CD4-positive, alpha-beta T cell (primary cell): ENCODE measurements at regions of chr15 and their contacts with region 1.

Region 1: DNA sequence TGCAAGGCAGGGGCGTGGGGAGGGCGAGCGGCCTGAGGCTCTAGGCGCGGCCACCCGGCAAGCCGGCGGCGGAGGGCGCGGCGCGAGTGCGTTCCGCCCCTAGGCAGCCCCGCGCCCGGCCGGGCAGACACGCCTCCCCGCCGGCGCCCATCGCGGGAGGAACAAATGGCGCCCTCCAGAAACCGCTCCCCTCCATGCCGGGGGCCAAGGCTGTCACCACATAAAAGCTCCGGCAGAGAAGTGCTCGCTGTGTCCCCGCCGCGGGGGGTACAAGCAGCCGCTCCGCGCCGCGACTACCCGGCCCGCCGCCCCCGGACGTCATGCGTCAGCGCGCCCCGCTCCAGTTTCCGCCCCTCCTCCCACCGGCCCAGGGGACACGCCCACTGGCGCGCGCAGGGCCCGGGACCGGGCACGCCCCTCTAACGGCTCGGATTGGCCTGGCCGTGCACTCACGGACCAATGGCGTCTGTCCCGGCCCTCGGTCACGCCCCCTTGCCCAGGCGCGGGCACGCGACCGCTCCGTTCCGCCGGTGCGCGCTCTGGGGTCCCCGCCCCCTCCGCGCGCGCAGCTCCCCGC is 391 bp upstream of the KLF13 start:
- DNase-seq: peak; percentile 98 to 100 (median 100)
- ATAC-seq: peak; percentile 69
- H3K4me3 ChIP-seq: peak overlapping the region; percentile 59
- H3K4me3 Mint-ChIP-seq: peak overlapping the region; percentile 90
- H3K27ac ChIP-seq: peak overlapping the region; percentile 71 to 95
- H3K27ac Mint-ChIP-seq: peak overlapping the region; percentile 92
- H3K4me1 ChIP-seq: peaks cover 43% of the 10 kb centered on the region
- H3K4me1 Mint-ChIP-seq: peaks cover 64% of the 10 kb centered on the region
- H3K27me3 ChIP-seq: no peaks in the 10 kb centered on the region
- H3K27me3 Mint-ChIP-seq: no peaks in the 10 kb centered on the region
- CTCF ChIP-seq: no peak

Region 2: DNA sequence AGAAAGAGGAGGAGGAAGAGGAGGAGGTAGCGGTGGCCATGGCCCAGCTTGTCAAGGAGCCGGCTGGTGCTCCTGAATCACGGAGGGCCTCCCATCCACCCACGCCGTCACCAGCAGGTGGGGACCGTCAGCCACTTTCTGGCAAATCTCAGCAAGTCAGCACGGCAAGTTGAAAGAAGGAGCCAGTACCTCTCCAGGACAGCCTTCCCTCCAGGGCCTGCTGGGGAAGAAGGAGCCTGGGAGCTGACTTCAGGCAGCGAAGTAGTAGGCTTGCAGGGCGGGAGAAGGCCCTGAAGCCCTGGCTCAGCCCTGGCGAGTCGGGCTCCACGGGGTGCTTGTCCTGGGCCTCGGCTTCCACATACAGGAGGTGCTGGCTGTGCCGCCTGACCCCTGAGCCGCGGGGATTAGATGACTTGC is 125.5 kb before region 1 on chr15:
- CTCF ChIA-PET with region 1: no interaction called
- POLR2A ChIA-PET with region 1: interaction called, 28 read pairs
- intact Hi-C with region 1: no loop called
- DNase-seq: peak; percentile 65 to 85 (median 73)
- ATAC-seq: peak; percentile 84
- H3K4me3 ChIP-seq: no peak overlapping the region
- H3K4me3 Mint-ChIP-seq: no peak overlapping the region
- H3K27ac ChIP-seq: no peak overlapping the region
- H3K27ac Mint-ChIP-seq: no peak overlapping the region
- H3K4me1 ChIP-seq: peaks cover 41% of the 10 kb centered on the region
- H3K4me1 Mint-ChIP-seq: peaks cover 22% of the 10 kb centered on the region
- H3K27me3 ChIP-seq: no peaks in the 10 kb centered on the region
- H3K27me3 Mint-ChIP-seq: no peaks in the 10 kb centered on the region
- CTCF ChIP-seq: peak; percentile 57

Region 3: DNA sequence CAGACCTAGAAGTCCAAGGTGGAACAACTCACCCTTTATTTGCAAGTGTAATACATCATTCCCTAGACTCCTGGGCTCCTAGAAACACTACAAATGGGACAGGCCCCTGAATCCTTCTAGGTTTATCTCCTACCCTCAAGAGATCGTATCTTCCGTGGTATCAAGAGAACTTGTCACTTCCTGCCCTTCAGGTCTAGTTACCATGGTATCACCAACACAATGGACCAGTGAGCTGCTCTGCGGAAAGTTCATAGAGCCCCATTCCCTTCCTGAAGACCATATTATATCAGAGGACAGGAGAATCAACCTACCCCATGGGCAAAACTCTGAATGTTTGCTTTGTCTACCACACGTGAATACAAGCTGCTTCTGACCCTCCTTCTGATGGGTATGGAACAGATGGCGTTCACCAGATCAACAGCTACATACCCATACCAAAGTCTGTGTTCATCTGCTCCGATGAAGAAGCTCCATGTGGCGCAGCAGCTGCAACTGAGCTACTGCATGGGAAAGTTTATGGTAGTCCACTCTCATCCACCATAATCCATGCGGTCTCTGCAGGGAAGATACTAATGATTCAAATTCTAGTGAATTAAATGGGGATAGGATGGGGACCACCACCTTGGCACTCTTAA is 84.2 kb before region 1 on chr15:
- CTCF ChIA-PET with region 1: no interaction called
- POLR2A ChIA-PET with region 1: interaction called, 13 read pairs
- intact Hi-C with region 1: no loop called
- DNase-seq: peak in 5 of 14 experiments; percentile 13 to 90 (median 77)
- ATAC-seq: peak; percentile 95
- H3K4me3 ChIP-seq: no peak overlapping the region
- H3K4me3 Mint-ChIP-seq: peak overlapping the region; percentile 32
- H3K27ac ChIP-seq: peak overlapping the region in 1 of 2 donors; percentile 64
- H3K27ac Mint-ChIP-seq: peak overlapping the region; percentile 75
- H3K4me1 ChIP-seq: peaks cover 32% of the 10 kb centered on the region
- H3K4me1 Mint-ChIP-seq: peaks cover 49% of the 10 kb centered on the region
- H3K27me3 ChIP-seq: no peaks in the 10 kb centered on the region
- H3K27me3 Mint-ChIP-seq: no peaks in the 10 kb centered on the region
- CTCF ChIP-seq: no peak

Region 4: GRCh38 chr15:31338879-31339557 is 12.8 kb after region 1 on chr15:
- CTCF ChIA-PET with region 1: no interaction called
- POLR2A ChIA-PET with region 1: interaction called, 38 read pairs
- intact Hi-C with region 1: no loop called
- DNase-seq: peak in 4 of 14 experiments; percentile 38 to 66 (median 54)
- ATAC-seq: no peak
- H3K4me3 ChIP-seq: no peak overlapping the region
- H3K4me3 Mint-ChIP-seq: peak overlapping the region; percentile 56
- H3K27ac ChIP-seq: peak overlapping the region; percentile 68 to 86
- H3K27ac Mint-ChIP-seq: peak overlapping the region; percentile 80
- H3K4me1 ChIP-seq: peaks cover 100% of the 10 kb centered on the region
- H3K4me1 Mint-ChIP-seq: peaks cover 98% of the 10 kb centered on the region
- H3K27me3 ChIP-seq: no peaks in the 10 kb centered on the region
- H3K27me3 Mint-ChIP-seq: no peaks in the 10 kb centered on the region
- CTCF ChIP-seq: no peak

Region 5: DNA sequence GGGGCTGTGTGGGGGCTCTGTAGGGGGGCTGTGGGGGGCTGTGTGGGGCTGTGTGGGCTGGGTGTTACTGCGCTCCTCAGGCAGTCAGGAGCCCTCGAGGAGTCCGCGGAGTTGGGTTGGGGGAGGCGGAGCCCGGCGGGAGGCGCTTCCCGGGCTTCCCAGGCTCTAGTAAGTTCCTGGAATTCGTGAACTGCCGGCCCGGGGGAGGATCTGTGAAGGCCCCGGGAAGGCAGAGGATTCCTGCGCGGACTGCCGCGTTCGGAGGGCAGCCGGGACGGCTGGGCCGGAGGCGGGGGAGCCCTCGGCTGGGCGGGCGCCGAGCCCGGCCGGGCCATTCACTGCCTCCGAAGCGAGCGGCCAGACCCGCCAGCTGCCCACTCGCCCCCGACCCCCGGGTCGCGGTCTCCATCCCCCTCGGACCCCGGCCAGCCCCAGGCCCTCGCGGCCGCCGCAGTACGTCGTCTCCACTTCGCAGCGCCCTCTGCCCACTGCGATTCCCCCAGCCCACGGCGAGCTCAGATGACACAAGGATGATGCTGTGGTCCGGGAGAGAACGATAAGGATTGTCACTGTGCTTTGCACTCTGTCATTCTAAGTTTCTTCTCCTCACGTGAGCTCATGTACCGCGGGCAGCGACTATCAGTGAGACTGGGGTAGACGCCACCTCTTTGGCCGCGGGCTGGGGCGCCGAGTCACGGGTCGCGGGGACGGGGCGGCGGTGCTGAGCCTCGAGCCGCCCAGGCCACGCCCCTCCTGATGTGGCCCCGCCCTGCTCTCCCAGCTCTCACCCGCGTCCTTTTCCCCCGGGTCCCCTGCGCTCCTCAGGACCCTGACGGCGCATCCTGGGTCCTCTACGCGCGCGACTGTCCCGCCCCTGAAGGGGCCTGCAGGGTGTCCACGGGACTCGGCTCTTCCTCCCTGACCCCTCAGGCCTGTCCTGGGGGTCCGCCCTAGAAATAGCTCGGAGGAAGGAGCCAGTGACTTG is 65.7 kb after region 1 on chr15:
- CTCF ChIA-PET with region 1: interaction called, 3 read pairs
- POLR2A ChIA-PET with region 1: interaction called, 19 read pairs
- intact Hi-C with region 1: loop called in 1 of 2 experiments (anchors 1 kb)
- DNase-seq: peak; percentile 65 to 93 (median 82)
- ATAC-seq: peak; percentile 87
- H3K4me3 ChIP-seq: peak overlapping the region; percentile 75
- H3K4me3 Mint-ChIP-seq: peak overlapping the region; percentile 95
- H3K27ac ChIP-seq: peak overlapping the region; percentile 8 to 37
- H3K27ac Mint-ChIP-seq: peak overlapping the region; percentile 86
- H3K4me1 ChIP-seq: peaks cover 51% of the 10 kb centered on the region
- H3K4me1 Mint-ChIP-seq: peaks cover 52% of the 10 kb centered on the region
- H3K27me3 ChIP-seq: no peaks in the 10 kb centered on the region
- H3K27me3 Mint-ChIP-seq: no peaks in the 10 kb centered on the region
- CTCF ChIP-seq: no peak

Region 6: GRCh38 chr15:31483053-31483985 is 157.1 kb after region 1 on chr15:
- CTCF ChIA-PET with region 1: interaction called, 23 read pairs
- POLR2A ChIA-PET with region 1: interaction called, 68 read pairs
- intact Hi-C with region 1: loop called (anchors 1 to 2 kb)
- DNase-seq: peak in 13 of 14 experiments; percentile 25 to 85 (median 48)
- ATAC-seq: peak; percentile 67
- H3K4me3 ChIP-seq: peak overlapping the region; percentile 57
- H3K4me3 Mint-ChIP-seq: peak overlapping the region; percentile 99
- H3K27ac ChIP-seq: no peak overlapping the region
- H3K27ac Mint-ChIP-seq: peak overlapping the region; percentile 94
- H3K4me1 ChIP-seq: peaks cover 48% of the 10 kb centered on the region
- H3K4me1 Mint-ChIP-seq: peaks cover 48% of the 10 kb centered on the region
- H3K27me3 ChIP-seq: no peaks in the 10 kb centered on the region
- H3K27me3 Mint-ChIP-seq: no peaks in the 10 kb centered on the region
- CTCF ChIP-seq: no peak

Region 7: GRCh38 chr15:33194704-33195670 is 1868.7 kb after region 1 on chr15 and contains the start of gene FMN1:
- CTCF ChIA-PET with region 1: no interaction called
- POLR2A ChIA-PET with region 1: no interaction called
- intact Hi-C with region 1: loop called in 1 of 2 experiments (anchors 5 kb)
- DNase-seq: peak; percentile 85 to 94 (median 90)
- ATAC-seq: peak; percentile 100
- H3K4me3 ChIP-seq: peak within 1 kb of the TSS; percentile 74
- H3K4me3 Mint-ChIP-seq: peak within 1 kb of the TSS; percentile 87
- H3K27ac ChIP-seq: peak within 1 kb of the TSS; percentile 14 to 39
- H3K27ac Mint-ChIP-seq: peak within 1 kb of the TSS; percentile 68
- H3K4me1 ChIP-seq: peaks cover 10% of the 10 kb centered on the region
- H3K4me1 Mint-ChIP-seq: peaks cover 14% of the 10 kb centered on the region
- H3K27me3 ChIP-seq: no peaks in the 10 kb centered on the region
- H3K27me3 Mint-ChIP-seq: peaks cover 11% of the 10 kb centered on the region
- CTCF ChIP-seq: no peak
- total RNA-seq, gene FMN1: 0.39 to 0.55 TPM